IMR-90 (cell line): ENCODE measurements at regions of chr3 and their contacts with region 1.

Region 1: DNA sequence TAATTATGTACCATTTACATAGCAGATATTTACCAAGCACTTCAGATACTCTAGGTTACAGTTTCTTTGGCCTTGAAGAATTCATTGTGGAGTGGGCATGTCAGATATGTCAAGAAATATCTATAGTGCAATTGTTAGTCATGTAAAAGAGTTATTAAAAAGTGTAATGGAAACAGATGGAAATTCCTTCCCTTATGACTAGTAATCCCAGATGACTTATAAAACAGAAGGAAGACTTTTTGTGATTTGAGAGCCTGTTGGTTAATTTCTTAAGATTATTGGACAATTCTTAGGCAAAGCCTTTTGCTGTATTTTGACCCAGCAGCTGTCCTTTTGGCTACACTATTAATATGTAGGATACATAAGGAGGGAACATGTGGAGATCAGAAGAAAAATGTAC is 708.9 kb upstream of the NECTIN3 start:
- DNase-seq: peak; percentile 48
- ATAC-seq: no peak
- H3K4me3 ChIP-seq: no peak overlapping the region
- H3K27ac ChIP-seq: no peak overlapping the region
- H3K4me1 ChIP-seq: no peaks in the 10 kb centered on the region
- H3K27me3 ChIP-seq: no peaks in the 10 kb centered on the region
- CTCF ChIP-seq: no peak
- POLR2A ChIP-seq: no peak
- RAD21 ChIP-seq: no peak

Region 2: DNA sequence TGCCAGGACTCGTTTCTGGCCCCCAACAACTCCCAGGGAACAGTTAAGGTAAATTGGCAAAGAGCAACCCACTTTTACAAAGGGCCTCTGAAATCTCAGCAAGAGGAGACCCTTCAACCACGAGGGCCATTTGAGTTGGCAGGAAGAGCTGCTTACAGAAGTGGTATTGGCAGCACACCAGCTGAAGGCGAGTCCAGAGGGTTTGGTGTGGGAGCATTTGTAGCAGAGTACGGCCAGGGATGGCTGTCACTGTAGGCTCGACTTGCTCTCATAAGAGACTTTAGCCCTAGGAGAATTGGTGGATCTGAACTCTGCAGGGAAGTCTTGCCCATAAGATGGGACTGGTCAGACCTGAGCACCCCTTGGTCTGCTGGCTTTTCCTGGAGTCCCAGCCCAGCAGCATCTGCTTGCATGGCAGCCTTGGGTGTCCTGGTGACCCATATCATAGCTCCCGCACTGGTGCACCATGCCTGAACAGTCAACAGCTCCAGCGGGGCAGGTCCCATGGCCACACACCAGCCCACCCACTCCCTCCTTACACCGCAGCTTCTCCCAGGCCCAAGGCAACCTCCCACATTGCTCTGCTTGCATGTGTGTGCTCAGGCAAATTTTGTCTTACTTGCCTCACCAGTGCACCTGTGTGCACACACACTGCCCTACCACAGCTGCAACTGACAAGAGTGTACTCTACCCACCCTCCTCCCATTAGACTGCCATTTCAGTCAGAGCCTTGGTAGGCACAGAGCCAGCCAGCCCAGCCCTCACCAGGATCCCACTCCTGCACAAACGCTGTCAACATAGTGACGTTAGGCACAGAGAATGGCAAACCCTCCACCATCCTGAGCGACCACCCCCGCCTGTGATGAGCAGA is 163.8 kb before region 1 on chr3:
- CTCF ChIA-PET with region 1: no interaction called
- POLR2A ChIA-PET with region 1: no interaction called
- dilution Hi-C with region 1: no loop called
- in situ Hi-C with region 1: no loop called
- intact Hi-C with region 1: no loop called
- DNase-seq: no peak
- ATAC-seq: no peak
- H3K4me3 ChIP-seq: no peak overlapping the region
- H3K27ac ChIP-seq: no peak overlapping the region
- H3K4me1 ChIP-seq: no peaks in the 10 kb centered on the region
- H3K27me3 ChIP-seq: no peaks in the 10 kb centered on the region
- CTCF ChIP-seq: no peak
- POLR2A ChIP-seq: no peak
- RAD21 ChIP-seq: no peak

Region 3: GRCh38 chr3:110343945-110344344 is 18.8 kb before region 1 on chr3:
- CTCF ChIA-PET with region 1: no interaction called
- POLR2A ChIA-PET with region 1: no interaction called
- dilution Hi-C with region 1: no loop called
- in situ Hi-C with region 1: no loop called
- intact Hi-C with region 1: loop called (anchors 1 kb)
- DNase-seq: peak; percentile 33
- ATAC-seq: no peak
- H3K4me3 ChIP-seq: no peak overlapping the region
- H3K27ac ChIP-seq: no peak overlapping the region
- H3K4me1 ChIP-seq: peaks cover 6% of the 10 kb centered on the region; the same call in 1 of the 2 replicates
- H3K27me3 ChIP-seq: no peaks in the 10 kb centered on the region
- CTCF ChIP-seq: no peak
- POLR2A ChIP-seq: no peak
- RAD21 ChIP-seq: no peak